HEK293T (cell line): ENCODE measurements at regions of chr6 and their contacts with region 1.

Region 1: DNA sequence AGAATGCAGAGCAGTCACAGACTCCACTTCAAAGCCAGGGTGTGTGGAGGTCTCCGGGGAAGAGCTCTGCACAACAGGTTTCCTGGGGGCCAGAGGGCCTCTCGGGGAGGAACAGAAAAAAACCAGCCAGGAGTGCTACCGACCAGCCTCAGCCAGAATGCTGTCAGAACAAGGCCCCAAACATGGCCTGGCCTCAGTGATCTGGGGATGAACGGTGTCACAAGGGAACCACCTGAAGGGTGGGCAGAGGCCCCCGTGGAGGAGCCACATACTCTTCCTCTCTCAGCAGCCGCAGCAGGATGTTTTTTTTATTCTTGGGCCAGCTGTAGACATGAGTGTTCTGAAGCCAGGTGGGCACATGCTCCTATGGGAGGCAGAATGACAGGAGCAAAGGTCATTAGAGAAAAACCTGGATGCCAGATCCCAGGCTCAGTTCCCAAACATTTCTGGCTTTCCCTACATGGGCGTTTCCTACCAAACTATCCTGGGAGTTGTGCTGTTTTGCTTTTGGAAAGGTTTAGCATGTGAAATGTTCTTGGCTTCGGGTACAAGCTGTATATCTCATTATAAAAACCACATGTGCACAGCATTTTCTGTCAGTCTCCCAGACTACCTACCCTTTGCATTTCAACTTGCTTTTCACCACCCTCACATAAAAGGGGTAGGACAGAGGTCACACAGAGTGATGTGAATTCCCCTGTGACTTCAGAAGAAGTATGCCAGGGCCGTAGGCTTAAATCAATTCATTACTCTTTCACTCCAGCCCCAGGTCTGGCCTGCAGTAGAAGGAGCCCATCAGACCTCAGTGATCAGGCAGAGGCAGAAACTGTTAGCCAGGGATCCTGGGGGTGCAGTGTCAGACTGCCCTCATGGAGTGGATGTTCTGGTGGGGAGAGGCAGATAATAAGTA is 46.2 kb downstream of the TRAF3IP2 start:
- DNase-seq: no peak

Region 2: DNA sequence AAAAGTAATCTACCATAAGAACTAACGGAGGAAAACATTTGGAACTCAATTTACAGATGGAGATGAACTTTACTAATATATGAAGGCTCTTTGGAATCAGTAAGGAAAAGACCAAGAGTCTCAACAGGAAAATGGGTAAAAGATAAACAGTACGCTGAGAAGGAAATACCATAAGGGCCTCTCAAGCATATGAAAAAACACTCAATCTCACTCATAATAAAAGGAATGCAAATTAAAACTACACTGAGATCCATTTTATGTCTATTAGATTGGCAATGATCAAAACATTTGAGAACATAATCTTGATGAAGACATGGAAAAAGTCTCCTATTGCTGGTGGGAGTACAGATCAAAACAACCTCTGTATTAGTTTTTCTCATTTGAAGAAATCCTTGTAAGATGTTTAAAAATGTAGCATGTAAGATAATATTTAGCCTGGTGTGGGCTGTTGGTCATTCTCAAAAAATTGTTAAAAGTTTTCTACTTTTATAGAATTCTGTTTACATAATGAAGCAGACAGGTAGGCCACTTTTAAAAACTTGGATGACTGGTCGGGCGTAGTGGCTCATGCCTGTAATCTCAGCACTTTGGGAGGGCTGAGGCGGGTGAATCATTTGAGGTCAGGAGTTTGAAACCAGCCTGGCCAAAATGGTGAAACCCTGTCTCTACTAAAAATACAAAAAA is 91.0 kb before region 1 on chr6:
- CTCF ChIA-PET with region 1: no interaction called
- POLR2A ChIA-PET with region 1: no interaction called
- DNase-seq: no peak

Region 3: GRCh38 chr6:111585241-111585973 is 26.0 kb after region 1 on chr6:
- CTCF ChIA-PET with region 1: no interaction called
- POLR2A ChIA-PET with region 1: no interaction called
- DNase-seq: no peak

Region 4: DNA sequence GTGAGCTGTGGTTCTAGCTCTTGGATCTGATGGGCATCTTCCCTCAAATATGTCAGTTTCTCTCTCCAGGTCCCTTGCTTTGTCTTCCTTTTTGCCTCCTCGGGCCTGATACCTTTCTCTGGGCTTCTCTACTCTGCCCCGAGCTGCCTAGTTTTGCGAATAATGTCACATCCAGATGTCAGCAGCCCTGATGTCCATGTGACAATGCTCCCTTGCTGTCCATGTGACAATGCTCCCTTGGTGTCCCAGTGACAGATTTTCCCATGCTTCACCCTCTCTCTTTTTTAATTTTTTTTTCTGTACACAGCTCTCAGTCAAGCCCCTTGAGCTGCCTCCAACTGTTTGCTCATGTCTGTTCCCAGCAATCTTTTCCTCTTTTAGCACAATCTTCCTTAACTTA is 39.8 kb after region 1 on chr6:
- CTCF ChIA-PET with region 1: interaction called, 10 read pairs
- POLR2A ChIA-PET with region 1: interaction called, 3 read pairs
- DNase-seq: no peak

Region 5: DNA sequence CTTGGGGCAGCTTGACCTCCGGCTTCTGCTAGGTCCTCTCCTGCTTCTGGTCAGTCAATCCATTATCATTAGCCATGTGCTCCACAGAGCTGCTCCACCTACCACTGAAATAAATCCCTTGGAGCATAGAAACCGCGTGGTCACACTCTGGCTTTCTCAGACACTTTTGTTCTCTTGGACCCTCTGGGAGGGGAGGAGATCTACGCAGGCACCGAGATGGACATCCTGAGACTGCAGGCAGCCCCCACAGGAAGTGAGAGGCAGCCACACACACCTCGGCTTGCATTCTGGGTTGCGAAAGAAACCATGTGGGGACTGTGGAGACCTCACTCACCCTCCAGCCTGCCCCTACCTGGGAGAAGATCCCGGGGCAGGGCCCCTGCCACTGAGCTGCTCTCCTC is 234.3 kb after region 1 on chr6:
- CTCF ChIA-PET with region 1: no interaction called
- POLR2A ChIA-PET with region 1: no interaction called
- DNase-seq: no peak

Region 6: DNA sequence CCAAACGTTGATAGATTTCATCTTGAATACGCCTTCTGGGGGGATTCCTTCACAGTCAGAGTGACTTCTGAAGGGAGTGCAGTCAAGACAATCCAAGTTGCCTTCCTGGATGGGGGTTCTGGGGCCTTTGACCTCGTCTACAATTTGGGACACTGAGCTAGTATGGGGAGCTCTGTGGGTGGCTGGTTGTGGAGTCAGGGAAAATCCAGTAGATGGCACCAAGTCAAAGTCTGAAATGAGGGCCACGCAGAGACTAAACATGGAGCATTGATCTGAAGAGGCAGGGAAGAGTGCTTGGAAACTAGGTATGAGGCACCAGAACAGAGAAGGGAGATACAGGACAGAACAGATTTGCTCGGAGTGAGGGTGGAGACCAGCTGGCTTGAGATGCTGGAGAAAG is 450.9 kb after region 1 on chr6:
- CTCF ChIA-PET with region 1: no interaction called
- POLR2A ChIA-PET with region 1: no interaction called
- DNase-seq: no peak